GM10248 (cell line): ENCODE measurements at regions of chr17 and their contacts with region 1.

Region 1: DNA sequence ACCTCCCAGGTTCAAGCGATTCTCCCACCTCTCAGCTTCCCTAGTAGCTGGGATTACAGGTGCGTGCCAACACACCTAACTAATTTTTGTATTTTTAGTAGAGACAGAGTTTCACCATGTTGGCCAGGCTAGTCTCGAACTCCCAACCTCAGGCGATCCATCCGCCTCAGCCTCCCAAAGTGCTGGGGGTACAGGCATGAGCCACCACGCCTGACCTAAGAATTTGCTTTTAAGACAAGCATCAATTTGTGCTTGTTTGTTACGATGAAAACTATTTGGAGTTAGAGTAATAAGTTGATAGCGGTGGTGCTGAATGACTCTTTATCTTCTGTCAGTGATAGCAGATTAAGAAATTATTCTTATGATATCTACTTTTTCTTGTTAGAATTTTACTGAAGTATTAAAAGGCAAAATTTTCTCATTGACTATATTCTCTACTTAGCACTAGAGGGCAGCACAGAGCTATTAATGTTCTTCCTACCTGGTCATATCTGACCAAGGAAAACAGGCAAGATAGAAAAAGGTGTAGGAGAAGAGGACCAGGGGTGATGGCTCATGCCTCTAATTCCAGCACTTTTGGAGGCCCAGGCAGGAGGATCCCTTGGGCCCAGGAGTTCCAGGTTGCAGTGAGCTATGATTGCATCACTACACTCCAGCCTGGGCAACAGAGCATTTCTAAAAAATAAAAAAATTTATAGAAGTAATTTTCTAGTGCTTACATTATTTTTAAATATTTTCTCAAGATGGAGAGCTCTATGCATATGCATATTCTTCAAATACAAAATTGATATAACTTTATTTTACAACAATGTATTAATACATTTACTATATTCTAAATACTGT is 24.5 kb downstream of the STXBP4 start:
- DNase-seq: peak; percentile 44
- CTCF ChIP-seq: peak; percentile 53

Region 2: GRCh38 chr17:54980375-54980774 is 12.6 kb before region 1 on chr17:
- CTCF ChIA-PET with region 1: interaction called, 18 read pairs
- POLR2A ChIA-PET with region 1: no interaction called
- DNase-seq: no peak
- CTCF ChIP-seq: no peak

Region 3: GRCh38 chr17:55023626-55024025 is 30.6 kb after region 1 on chr17:
- CTCF ChIA-PET with region 1: interaction called, 13 read pairs
- POLR2A ChIA-PET with region 1: no interaction called
- DNase-seq: no peak
- CTCF ChIP-seq: no peak

Region 4: DNA sequence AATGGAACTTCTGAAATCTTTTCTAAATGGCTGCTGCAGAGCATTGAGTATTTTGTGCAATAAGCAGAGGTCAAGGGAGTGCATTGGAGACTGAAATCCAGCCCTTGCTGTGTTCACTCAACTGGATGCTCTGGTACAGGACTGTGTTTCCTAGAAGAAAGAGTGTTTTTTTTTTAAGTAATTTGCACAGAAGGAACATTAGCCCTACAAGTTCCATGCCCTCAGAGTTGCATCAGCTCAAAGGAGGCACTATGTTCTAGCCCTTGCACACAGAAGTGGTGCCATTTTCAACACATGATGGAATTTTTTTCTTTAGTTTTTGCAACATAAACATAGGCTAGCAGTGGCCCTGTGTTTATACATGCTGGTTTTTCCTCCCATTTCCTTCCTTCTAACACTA is 127.6 kb after region 1 on chr17:
- CTCF ChIA-PET with region 1: no interaction called
- POLR2A ChIA-PET with region 1: no interaction called
- DNase-seq: no peak
- CTCF ChIP-seq: no peak

Region 5: DNA sequence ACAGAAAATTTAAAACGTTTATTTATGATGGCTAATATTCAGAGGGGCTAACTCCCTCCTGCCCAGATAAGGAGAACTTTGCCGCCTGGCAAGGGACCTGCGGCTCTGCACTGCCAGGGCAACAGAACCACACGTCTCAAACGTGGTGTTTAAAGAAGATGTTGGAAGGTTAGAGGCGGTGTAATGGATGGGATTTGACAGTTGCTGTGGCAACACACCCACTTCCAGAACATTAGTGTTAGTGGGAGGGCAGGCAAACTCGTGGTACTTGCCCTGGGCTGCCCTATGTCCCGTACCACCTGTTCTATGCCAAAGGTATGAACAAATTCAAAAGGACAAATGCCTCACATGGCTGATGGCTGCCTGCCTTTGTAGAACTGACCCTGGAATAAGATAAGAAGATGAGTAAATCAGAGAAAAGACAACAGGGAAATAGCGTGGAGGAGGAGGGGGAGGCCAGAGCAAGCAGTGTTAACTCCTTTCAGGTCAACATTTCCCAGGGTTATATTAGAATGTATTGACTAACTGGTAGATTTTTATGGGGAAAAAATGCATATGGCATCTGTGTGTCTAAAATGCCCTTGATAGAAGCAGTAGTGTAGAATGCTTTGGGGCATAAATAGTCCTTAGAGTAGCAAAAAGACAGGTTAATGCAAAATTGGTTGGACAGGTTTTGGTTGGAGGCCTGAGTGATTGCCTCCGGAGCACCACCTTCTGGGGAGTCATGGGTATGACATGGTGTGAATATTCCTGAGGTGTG is 302.6 kb after region 1 on chr17:
- CTCF ChIA-PET with region 1: interaction called, 70 read pairs
- POLR2A ChIA-PET with region 1: no interaction called
- DNase-seq: peak; percentile 71
- CTCF ChIP-seq: peak; percentile 67

Region 6: DNA sequence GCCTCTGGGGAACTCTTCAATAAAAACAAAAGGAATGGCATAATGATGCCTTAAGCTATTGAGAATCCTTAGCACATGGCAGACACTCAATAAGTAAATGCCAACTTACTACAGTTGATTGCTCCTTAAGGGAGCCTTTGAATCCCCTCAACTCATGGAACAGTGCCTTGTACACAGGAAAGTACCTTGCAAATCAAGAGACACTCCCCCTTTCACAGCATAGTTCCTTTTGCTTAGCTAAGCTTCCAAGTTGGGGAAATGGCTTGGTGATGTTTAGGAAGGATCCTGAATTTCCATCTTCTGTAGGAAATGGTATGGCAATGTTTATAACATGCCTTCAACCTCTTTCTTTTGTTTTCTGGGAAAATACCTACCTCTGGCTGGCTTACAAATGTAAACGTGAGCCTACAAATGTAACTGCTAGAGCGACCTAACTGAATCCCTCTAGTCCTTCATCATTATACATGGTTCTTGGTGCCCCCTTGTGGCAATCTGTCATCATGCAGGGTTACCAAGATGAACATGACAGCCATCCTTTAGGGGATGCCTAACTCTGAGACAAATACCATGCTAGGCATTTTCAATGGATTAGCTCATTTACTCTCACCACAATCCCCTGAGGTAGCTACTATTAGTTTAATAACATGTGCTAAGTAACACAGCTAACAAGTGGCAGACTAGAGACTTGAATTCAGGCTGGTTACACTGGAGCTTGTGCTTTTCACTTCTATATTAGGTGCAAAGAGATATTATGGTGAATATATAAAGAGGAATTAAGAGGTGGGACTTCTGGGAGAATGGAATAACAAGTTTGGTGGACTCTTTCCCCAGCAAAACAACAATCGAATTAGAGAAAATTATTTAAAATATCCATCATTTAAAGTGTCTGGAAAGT is 363.7 kb after region 1 on chr17:
- CTCF ChIA-PET with region 1: interaction called, 60 read pairs
- POLR2A ChIA-PET with region 1: no interaction called
- DNase-seq: peak; percentile 72
- CTCF ChIP-seq: peak; percentile 77